Aorta (tissue), 5 donors: ENCODE measurements at regions of chr10 and their contacts with region 1.

Region 1: DNA sequence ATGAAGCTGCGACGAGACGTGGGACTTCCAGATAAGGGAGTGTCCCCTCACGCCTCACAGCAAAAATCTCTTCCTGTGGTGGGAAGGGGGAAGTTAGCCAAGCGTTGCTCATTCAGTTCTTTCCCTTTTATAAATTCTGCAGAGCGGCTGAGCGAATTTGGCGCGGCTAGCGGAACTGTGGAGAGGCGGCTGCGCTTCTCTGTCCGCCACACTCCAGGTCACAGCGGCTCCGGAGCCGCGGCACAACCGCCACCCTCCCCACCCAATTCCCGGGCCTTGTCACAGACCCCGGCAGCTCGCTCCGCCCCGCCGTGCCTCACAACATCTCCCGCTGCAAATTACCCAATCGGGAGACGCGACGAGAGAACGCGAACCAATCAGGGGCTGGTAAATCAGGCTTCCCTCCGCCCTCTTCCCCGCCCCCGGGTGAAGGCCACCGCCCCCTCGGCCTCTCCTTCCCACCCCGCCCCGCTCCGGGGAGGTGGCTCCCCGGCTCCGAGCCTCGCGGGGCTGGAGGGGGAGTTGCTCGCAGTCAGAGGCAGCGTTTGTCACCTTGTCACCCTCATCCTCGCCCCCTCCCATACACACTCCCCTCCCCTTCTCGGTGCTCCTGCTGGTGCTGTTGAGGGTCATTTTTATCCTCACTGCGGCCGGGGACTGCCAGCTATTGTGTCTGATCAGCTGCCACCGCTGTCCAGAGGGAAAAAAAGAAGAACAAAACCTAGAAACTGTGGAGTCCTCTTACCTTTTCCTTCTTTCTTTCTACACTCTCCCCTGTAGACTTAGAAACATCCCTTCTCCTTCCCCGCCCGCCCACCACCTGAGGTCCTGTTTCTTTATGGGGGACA is 918 bp upstream of the ARHGAP21 start:
- DNase-seq: peak; percentile 99
- ATAC-seq: peak; percentile 95
- H3K4me3 ChIP-seq: peak overlapping the region; percentile 59 to 96
- H3K27ac ChIP-seq: peak overlapping the region in 1 of 2 donors; percentile 93
- H3K4me1 ChIP-seq: no peaks in the 10 kb centered on the region
- H3K27me3 ChIP-seq: no peaks in the 10 kb centered on the region

Region 2: DNA sequence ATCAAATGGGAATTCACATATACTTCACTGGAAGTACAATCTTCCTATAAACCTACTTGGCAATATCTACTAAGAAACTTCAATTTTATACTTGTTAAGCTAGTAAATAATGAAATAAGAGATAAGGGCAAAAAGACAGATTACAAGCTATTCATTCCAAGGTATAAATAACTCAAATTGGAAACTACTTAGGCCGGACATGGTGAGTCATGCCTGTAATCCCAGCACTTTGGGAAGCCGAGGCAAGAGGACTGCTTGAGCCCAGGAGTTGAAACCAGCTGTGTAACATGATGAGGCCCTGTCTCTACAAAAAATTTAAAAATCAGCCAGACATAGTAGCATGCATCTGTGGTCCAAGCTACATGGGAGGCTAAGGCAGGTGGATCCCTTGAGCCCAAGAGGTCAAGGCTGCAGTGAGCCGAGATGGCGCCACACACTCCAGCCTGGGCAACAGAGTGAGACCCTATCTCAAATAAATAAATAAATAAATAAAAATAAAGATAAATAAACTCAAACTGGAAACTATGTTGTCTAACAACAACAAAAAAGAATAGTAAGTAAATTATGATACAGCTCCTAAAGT is 38.6 kb before region 1 on chr10:
- intact Hi-C with region 1: loop called in 1 of 2 experiments (anchors 5 kb)
- DNase-seq: peak in 1 of 2 donors; percentile 62
- ATAC-seq: peak; percentile 62
- H3K4me3 ChIP-seq: no peak overlapping the region
- H3K27ac ChIP-seq: no peak overlapping the region
- H3K4me1 ChIP-seq: peaks cover 0 to 6% of the 10 kb centered on the region in 2 donors
- H3K27me3 ChIP-seq: no peaks in the 10 kb centered on the region

Region 3: DNA sequence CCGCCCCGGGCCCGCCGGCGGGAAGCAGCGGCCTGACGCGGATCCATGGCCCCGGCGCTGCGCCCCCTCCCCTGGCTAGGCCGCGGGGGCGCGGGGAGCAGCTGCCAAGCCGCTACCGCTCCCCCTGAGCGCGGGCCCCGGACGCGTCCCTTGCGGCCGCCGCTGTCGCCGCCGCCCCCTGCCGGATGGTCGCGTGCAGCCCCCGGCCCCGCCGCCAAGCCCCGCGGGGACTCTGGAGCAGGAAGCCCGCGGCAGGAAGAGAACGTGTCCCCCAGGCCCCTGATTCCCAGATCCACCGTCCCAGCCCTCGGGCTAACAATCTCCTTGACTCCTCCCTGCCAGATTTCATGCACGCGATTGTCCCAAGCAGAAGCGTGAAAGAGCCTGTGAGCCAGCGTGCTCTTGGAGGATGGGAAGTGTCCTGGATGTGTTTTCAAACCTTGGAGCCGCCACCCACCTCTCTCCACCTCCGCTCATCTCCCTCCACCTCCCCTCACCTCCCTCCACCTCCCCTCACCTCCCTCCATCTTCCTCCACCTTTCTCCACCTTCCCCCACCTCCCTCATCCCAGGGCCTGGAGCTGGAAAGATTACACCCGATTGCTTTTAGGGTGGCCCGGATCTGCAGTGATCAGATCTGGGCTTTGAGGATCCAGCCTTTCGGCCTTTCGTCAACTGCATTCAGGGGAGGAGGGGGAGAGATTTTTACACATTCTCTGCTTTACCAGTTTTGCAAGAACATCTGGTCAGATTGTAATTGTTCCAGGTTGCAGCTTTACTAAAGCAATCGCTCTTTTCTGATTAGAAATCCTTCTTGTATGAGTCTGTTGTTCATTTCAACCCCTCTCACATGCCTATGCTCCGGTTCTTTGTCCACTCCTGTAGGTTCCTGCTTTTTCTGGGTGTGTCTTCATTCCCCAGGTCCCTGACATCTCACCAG is 228.4 kb after region 1 on chr10:
- intact Hi-C with region 1: loop called in 1 of 2 experiments (anchors 10 kb)
- DNase-seq: peak; percentile 66 to 77
- ATAC-seq: peak; percentile 47
- H3K4me3 ChIP-seq: peak overlapping the region; percentile 58 to 66
- H3K27ac ChIP-seq: no peak overlapping the region
- H3K4me1 ChIP-seq: no peaks in the 10 kb centered on the region
- H3K27me3 ChIP-seq: no peaks in the 10 kb centered on the region

Region 4: GRCh38 chr10:25016376-25017154 is 292.0 kb after region 1 on chr10 and contains the start of gene THNSL1:
- intact Hi-C with region 1: loop called in 1 of 2 experiments (anchors 2 kb)
- DNase-seq: peak; percentile 99
- ATAC-seq: peak; percentile 100
- H3K4me3 ChIP-seq: peak within 1 kb of the TSS; percentile 44 to 84
- H3K27ac ChIP-seq: peak within 1 kb of the TSS; percentile 78 to 94
- H3K4me1 ChIP-seq: peaks cover 0 to 1% of the 10 kb centered on the region in 2 donors
- H3K27me3 ChIP-seq: no peaks in the 10 kb centered on the region
- total RNA-seq, gene THNSL1: 1.2 to 2.0 TPM